IMR-90 (cell line): ENCODE measurements at regions of chr16 and their contacts with region 1.

Region 1: GRCh38 chr16:28091656-28092055 is 28.1 kb upstream of the GSG1L start:
- DNase-seq: no peak
- ATAC-seq: no peak
- H3K4me3 ChIP-seq: no peak overlapping the region
- H3K27ac ChIP-seq: no peak overlapping the region
- H3K4me1 ChIP-seq: peaks cover 6% of the 10 kb centered on the region
- H3K27me3 ChIP-seq: no peaks in the 10 kb centered on the region
- CTCF ChIP-seq: no peak
- POLR2A ChIP-seq: no peak
- RAD21 ChIP-seq: no peak

Region 2: DNA sequence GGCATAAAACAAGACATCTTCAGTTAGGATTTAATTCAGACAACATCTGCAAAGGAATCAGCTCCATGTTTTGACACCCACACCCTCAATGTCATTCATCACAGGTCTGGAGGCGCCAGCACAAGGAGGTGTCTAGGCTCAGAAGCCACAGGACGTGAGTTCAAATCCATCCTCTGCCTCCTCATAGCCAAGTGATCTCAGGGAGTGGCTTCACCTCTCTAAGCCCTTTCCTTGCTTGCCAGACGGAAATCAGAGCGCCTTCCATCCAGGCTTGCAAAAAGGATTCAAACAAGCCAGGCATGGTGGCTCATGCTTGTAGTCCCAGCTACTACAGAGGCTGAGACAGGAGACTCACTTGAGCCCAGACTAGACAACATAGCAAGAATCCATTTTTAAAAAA is 112.8 kb before region 1 on chr16:
- CTCF ChIA-PET with region 1: no interaction called
- POLR2A ChIA-PET with region 1: interaction called, 24 read pairs
- dilution Hi-C with region 1: no loop called
- in situ Hi-C with region 1: no loop called
- intact Hi-C with region 1: no loop called
- DNase-seq: no peak
- ATAC-seq: no peak
- H3K4me3 ChIP-seq: no peak overlapping the region
- H3K27ac ChIP-seq: no peak overlapping the region
- H3K4me1 ChIP-seq: no peaks in the 10 kb centered on the region
- H3K27me3 ChIP-seq: peaks cover 8% of the 10 kb centered on the region
- CTCF ChIP-seq: no peak
- POLR2A ChIP-seq: no peak
- RAD21 ChIP-seq: no peak

Region 3: DNA sequence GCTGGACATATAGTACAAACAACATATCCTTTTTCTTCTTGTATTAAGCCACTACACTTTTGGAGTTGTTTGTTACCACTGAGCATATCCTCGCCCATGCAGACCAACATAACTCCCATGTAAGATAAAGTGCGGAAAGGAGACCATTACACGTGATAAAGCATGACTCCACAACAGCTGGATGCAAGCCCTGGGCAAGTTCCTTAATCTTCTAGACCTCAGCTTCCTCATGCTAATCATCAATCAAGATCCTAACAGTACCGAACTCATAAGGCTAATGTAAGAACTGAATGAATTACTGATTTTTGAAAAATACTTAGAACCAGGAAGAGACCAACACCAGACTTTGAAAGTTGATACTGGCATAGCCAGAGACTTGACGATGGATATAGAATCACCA is 18.8 kb after region 1 on chr16:
- CTCF ChIA-PET with region 1: no interaction called
- POLR2A ChIA-PET with region 1: no interaction called
- dilution Hi-C with region 1: no loop called
- in situ Hi-C with region 1: no loop called
- intact Hi-C with region 1: no loop called
- DNase-seq: no peak
- ATAC-seq: no peak
- H3K4me3 ChIP-seq: no peak overlapping the region
- H3K27ac ChIP-seq: peak overlapping the region; percentile 61; the same call in 1 of the 2 replicates
- H3K4me1 ChIP-seq: peaks cover 10% of the 10 kb centered on the region
- H3K27me3 ChIP-seq: no peaks in the 10 kb centered on the region
- CTCF ChIP-seq: no peak
- POLR2A ChIP-seq: no peak
- RAD21 ChIP-seq: no peak

Region 4: GRCh38 chr16:28126684-28127620 is 35.3 kb after region 1 on chr16:
- CTCF ChIA-PET with region 1: no interaction called
- POLR2A ChIA-PET with region 1: no interaction called
- dilution Hi-C with region 1: no loop called
- in situ Hi-C with region 1: no loop called
- intact Hi-C with region 1: no loop called
- DNase-seq: no peak
- ATAC-seq: no peak
- H3K4me3 ChIP-seq: no peak overlapping the region
- H3K27ac ChIP-seq: no peak overlapping the region
- H3K4me1 ChIP-seq: no peaks in the 10 kb centered on the region
- H3K27me3 ChIP-seq: no peaks in the 10 kb centered on the region
- CTCF ChIP-seq: no peak
- POLR2A ChIP-seq: no peak
- RAD21 ChIP-seq: no peak